GM10248 (cell line): ENCODE measurements at regions of chr15 and their contacts with region 1.

Region 1: DNA sequence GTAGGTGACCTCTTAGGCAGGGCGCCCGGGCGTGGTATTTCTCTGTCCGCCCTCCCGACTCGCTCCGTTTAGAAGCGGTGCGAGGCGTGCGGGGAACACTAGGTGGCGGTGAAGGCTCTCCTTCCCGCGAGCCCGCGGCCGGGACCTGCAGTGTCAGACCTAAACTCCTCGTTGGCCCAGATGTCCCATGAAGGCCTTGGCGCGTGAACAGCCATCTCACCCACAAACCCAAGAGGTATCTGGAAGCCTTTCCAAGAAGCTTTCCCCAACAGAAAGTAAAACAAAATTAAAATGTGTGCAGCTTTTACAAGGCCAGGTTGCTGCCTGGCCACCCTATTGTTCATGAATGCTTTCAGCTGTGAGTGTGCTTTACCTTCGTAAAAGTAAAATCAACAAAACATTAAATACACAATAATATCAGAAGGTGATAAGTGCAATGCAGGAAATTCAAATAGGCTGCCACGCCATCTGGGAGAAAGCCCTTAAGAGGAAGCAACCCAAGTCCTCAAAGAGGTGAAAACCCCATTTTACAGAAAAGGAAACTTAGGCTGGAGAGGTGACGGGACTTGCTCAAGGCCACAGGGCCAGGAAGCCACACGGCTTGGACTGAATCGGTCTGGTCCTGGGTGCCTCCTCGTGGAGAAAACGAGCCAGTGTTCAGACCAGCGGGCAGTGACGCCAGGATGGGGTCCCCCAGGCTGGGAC is 120.3 kb downstream of the ETFA start:
- DNase-seq: peak; percentile 92
- CTCF ChIP-seq: peak; percentile 88

Region 2: DNA sequence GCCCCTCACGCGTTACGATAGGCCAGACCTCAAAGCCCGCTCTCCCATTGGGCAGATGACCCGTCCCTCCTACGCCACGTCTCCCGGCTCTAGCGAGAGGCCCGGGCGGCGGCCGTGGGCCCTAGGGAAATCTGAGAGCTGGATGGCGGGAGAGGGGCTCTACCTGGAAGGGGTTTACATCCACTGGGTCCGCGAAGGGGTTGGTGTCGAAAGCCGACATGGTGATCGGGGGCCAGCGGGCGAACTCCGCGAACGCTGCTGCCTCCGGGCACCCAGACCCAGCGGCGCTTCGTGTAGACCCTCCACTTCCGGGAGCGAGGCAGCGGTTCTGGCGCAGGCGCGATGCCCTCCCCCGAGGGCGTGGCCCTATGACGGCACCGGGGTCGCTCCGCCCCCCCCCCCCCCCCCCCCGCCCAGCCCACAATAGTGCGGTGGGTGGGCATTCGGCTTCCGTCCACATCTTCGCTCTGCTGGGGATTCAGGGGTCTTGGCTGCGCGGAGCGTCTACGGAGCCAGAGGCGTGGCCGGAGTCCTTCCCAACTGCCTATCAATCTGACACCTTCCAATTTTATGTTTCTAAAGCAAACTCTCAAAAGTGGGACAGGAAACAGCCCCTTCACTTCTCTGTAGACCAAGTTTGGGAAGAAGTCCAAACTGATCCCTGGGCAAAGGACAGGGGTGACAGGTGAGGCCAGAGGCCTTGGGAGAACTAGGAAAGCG is 1317.8 kb before region 1 on chr15 and contains the start of gene SCAMP2:
- CTCF ChIA-PET with region 1: no interaction called
- POLR2A ChIA-PET with region 1: no interaction called
- DNase-seq: peak; percentile 96
- CTCF ChIP-seq: no peak

Region 3: GRCh38 chr15:76206325-76206976 is 15.5 kb after region 1 on chr15:
- CTCF ChIA-PET with region 1: interaction called, 26 read pairs
- POLR2A ChIA-PET with region 1: no interaction called
- DNase-seq: no peak
- CTCF ChIP-seq: no peak

Region 4: DNA sequence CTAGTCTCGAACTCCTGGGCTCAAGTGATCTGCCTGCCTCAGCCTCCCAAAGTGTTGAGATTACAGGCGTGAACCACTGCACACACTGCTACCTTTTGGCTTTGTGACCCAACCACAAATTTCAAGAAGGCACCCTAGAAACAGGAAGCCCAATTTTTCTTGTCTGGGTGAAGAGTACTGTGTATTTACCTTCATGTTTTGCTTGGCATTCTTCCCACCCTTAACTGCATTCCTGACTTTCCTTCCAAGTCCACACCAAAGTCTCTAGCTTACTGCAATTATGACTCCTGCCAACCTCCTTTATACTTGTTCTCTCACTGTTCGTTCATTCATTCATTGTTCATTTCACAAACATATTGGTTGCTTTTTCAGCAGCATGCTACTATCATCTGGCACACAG is 26.0 kb after region 1 on chr15:
- CTCF ChIA-PET with region 1: interaction called, 11 read pairs
- POLR2A ChIA-PET with region 1: no interaction called
- DNase-seq: no peak
- CTCF ChIP-seq: no peak